Caco-2 (cell line): ENCODE measurements at regions of chr18 and their contacts with region 1.

Region 1: GRCh38 chr18:3062798-3063680 is 50.1 kb upstream of the LPIN2 start:
- DNase-seq: peak; percentile 75 to 78
- H3K4me3 ChIP-seq: no peak overlapping the region
- H3K4me3 Mint-ChIP-seq: peak overlapping the region; percentile 4
- H3K27ac Mint-ChIP-seq: peak overlapping the region; percentile 11
- H3K4me1 ChIP-seq: peaks cover 21% of the 10 kb centered on the region
- H3K4me1 Mint-ChIP-seq: peaks cover 13% of the 10 kb centered on the region
- H3K27me3 ChIP-seq: no peaks in the 10 kb centered on the region
- H3K27me3 Mint-ChIP-seq: no peaks in the 10 kb centered on the region
- CTCF ChIP-seq: peak; percentile 65 to 91

Region 2: DNA sequence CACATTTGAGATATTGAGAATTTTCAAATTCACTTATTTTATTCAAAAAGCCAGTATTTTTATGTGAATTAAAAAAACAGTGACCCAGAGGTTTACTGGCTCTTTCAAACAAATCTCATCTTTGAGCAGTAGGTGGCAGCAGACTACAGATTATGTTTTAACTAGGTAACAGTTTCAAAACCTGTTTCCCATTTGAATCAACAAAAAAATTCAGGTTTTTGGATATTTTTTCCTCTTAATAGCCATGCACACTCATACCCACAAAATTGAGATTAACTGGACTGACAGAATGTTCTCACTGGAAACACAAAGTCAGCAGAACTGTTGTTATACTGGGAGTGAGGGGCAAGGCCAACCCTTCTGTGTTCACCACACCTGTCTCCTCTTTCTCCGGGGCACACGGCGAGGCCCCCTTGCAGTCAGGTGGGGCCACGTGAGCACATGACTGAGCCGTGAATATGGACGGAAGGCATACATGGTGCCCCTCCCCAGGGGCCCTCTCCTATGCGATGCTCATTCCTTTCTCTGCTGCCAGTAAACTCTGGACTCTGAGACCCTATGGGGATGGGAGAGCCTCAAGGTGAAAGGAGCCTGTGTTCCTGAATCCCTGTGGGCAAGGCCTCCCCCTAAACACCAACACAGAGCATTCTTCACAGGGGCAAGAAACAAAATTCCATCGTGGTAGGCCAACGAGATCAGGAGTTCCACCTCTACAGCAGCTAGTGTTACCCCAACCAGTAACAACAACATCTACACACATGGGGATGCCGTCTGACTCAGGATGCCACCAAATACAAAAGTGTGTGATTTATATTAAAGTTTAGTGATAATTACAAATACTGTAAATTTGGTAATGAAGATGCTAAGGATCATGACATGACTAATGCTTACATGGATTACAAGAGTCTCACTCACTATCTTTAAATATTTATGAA is 130.5 kb before region 1 on chr18:
- CTCF ChIA-PET with region 1: no interaction called
- POLR2A ChIA-PET with region 1: no interaction called
- intact Hi-C with region 1: loop called (anchors 1 kb)
- DNase-seq: peak in 1 of 2 experiments; percentile 68
- H3K4me3 ChIP-seq: no peak overlapping the region
- H3K4me3 Mint-ChIP-seq: no peak overlapping the region
- H3K27ac Mint-ChIP-seq: no peak overlapping the region
- H3K4me1 ChIP-seq: no peaks in the 10 kb centered on the region
- H3K4me1 Mint-ChIP-seq: peaks cover 6% of the 10 kb centered on the region
- H3K27me3 ChIP-seq: no peaks in the 10 kb centered on the region
- H3K27me3 Mint-ChIP-seq: no peaks in the 10 kb centered on the region
- CTCF ChIP-seq: peak; percentile 73 to 75

Region 3: GRCh38 chr18:2939317-2939716 is 123.7 kb before region 1 on chr18:
- CTCF ChIA-PET with region 1: interaction called, 3 read pairs
- POLR2A ChIA-PET with region 1: no interaction called
- intact Hi-C with region 1: loop called (anchors 1 kb)
- DNase-seq: peak; percentile 76 to 87
- H3K4me3 ChIP-seq: no peak overlapping the region
- H3K4me3 Mint-ChIP-seq: peak overlapping the region; percentile 45
- H3K27ac Mint-ChIP-seq: no peak overlapping the region
- H3K4me1 ChIP-seq: peaks cover 22% of the 10 kb centered on the region
- H3K4me1 Mint-ChIP-seq: no peaks in the 10 kb centered on the region
- H3K27me3 ChIP-seq: no peaks in the 10 kb centered on the region
- H3K27me3 Mint-ChIP-seq: no peaks in the 10 kb centered on the region
- CTCF ChIP-seq: no peak

Region 4: GRCh38 chr18:2994603-2995432 is 68.2 kb before region 1 on chr18:
- CTCF ChIA-PET with region 1: interaction called, 10 read pairs
- POLR2A ChIA-PET with region 1: no interaction called
- intact Hi-C with region 1: loop called (anchors 2 kb)
- DNase-seq: peak; percentile 47 to 61
- H3K4me3 ChIP-seq: no peak overlapping the region
- H3K4me3 Mint-ChIP-seq: no peak overlapping the region
- H3K27ac Mint-ChIP-seq: peak overlapping the region; percentile 47
- H3K4me1 ChIP-seq: peaks cover 14% of the 10 kb centered on the region
- H3K4me1 Mint-ChIP-seq: peaks cover 17% of the 10 kb centered on the region
- H3K27me3 ChIP-seq: no peaks in the 10 kb centered on the region
- H3K27me3 Mint-ChIP-seq: no peaks in the 10 kb centered on the region
- CTCF ChIP-seq: peak; percentile 52 to 65

Region 5: GRCh38 chr18:3027370-3027891 is 35.6 kb before region 1 on chr18:
- CTCF ChIA-PET with region 1: interaction called, 3 read pairs
- POLR2A ChIA-PET with region 1: no interaction called
- intact Hi-C with region 1: loop called (anchors 2 kb)
- DNase-seq: no peak
- H3K4me3 ChIP-seq: no peak overlapping the region
- H3K4me3 Mint-ChIP-seq: peak overlapping the region; percentile 26
- H3K27ac Mint-ChIP-seq: peak overlapping the region; percentile 15
- H3K4me1 ChIP-seq: peaks cover 24% of the 10 kb centered on the region
- H3K4me1 Mint-ChIP-seq: peaks cover 25% of the 10 kb centered on the region
- H3K27me3 ChIP-seq: no peaks in the 10 kb centered on the region
- H3K27me3 Mint-ChIP-seq: no peaks in the 10 kb centered on the region
- CTCF ChIP-seq: no peak

Region 6: DNA sequence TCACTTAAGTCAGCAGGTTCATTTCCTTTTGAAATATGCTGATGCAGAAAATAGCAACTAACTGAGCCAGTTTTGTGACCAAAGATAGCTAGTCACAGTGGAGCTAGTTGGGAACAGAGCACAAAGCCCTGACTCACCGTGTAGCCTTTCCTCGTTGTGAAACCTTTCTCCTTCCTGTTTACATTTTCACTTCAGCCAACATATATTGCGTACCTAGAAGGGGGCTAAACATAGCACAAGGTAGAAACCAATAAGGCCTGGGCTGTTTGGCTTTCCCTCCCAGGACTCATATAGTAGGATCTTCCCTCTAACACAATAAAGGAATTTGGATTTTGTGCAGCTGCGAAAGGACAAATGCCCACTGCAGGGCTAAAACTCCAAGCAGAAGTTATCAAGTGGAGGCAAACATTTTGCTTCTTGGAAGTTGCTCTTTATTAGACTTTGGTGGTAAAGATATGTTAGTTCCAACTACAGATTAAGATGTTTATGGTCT is 25.6 kb before region 1 on chr18:
- CTCF ChIA-PET with region 1: interaction called, 4 read pairs
- POLR2A ChIA-PET with region 1: no interaction called
- intact Hi-C with region 1: loop called (anchors 2 kb)
- DNase-seq: peak; percentile 51 to 56
- H3K4me3 ChIP-seq: no peak overlapping the region
- H3K4me3 Mint-ChIP-seq: no peak overlapping the region
- H3K27ac Mint-ChIP-seq: peak overlapping the region; percentile 50
- H3K4me1 ChIP-seq: peaks cover 10% of the 10 kb centered on the region; the same call in 1 of the 2 replicates
- H3K4me1 Mint-ChIP-seq: peaks cover 15% of the 10 kb centered on the region
- H3K27me3 ChIP-seq: no peaks in the 10 kb centered on the region
- H3K27me3 Mint-ChIP-seq: no peaks in the 10 kb centered on the region
- CTCF ChIP-seq: no peak

Region 7: GRCh38 chr18:3129053-3129864 is 66.2 kb after region 1 on chr18:
- CTCF ChIA-PET with region 1: interaction called, 8 read pairs
- POLR2A ChIA-PET with region 1: no interaction called
- intact Hi-C with region 1: loop called (anchors 2 kb)
- DNase-seq: peak; percentile 85 to 87
- H3K4me3 ChIP-seq: no peak overlapping the region
- H3K4me3 Mint-ChIP-seq: no peak overlapping the region
- H3K27ac Mint-ChIP-seq: no peak overlapping the region
- H3K4me1 ChIP-seq: no peaks in the 10 kb centered on the region
- H3K4me1 Mint-ChIP-seq: peaks cover 7% of the 10 kb centered on the region
- H3K27me3 ChIP-seq: no peaks in the 10 kb centered on the region
- H3K27me3 Mint-ChIP-seq: no peaks in the 10 kb centered on the region
- CTCF ChIP-seq: peak; percentile 85 to 98

Region 8: DNA sequence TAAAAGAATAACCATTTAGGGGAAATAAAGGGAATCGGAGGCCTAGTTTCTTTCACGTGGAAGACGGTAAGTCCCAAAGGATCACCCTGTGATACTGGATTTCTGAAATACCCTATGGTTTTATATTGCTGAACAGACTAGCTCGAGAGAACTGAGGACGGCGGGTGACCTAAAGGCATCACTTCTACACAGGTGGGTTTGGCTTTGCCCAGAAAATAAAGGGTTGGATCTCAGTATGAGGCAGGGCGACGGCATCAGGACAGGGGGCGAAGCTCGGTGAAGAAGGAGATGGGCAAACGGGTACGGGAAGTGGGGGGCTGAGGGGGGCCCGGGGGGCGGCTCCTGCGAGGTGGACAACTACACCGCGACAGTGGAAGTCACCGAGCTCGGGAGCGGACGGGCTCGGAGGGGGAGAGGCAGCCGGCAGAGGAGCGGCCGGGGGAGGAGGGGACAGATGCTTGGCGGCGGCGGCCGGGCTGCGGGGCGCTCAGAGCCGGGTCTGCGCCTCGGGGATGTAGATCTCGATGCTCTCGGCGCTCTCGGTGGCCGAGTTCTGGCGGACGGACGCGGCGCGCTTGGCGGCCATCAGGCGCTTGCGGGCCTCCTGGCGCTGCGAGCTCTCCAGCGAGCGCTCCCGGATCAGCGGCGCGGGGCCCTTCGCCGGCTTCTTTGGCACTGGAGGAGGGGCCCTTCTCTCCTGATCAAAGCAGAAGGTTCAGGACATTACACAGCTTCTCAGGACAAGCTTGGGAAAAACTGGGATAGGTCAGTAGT is 435.8 kb after region 1 on chr18:
- CTCF ChIA-PET with region 1: no interaction called
- POLR2A ChIA-PET with region 1: no interaction called
- intact Hi-C with region 1: no loop called
- DNase-seq: peak; percentile 52 to 60
- H3K4me3 ChIP-seq: peak overlapping the region; percentile 38
- H3K4me3 Mint-ChIP-seq: peak overlapping the region; percentile 83
- H3K27ac Mint-ChIP-seq: peak overlapping the region; percentile 45
- H3K4me1 ChIP-seq: peaks cover 10% of the 10 kb centered on the region
- H3K4me1 Mint-ChIP-seq: peaks cover 20% of the 10 kb centered on the region
- H3K27me3 ChIP-seq: no peaks in the 10 kb centered on the region
- H3K27me3 Mint-ChIP-seq: no peaks in the 10 kb centered on the region
- CTCF ChIP-seq: no peak